ENCODE measurements at regions of chr11 and their contacts with region 1.

Region 1: DNA sequence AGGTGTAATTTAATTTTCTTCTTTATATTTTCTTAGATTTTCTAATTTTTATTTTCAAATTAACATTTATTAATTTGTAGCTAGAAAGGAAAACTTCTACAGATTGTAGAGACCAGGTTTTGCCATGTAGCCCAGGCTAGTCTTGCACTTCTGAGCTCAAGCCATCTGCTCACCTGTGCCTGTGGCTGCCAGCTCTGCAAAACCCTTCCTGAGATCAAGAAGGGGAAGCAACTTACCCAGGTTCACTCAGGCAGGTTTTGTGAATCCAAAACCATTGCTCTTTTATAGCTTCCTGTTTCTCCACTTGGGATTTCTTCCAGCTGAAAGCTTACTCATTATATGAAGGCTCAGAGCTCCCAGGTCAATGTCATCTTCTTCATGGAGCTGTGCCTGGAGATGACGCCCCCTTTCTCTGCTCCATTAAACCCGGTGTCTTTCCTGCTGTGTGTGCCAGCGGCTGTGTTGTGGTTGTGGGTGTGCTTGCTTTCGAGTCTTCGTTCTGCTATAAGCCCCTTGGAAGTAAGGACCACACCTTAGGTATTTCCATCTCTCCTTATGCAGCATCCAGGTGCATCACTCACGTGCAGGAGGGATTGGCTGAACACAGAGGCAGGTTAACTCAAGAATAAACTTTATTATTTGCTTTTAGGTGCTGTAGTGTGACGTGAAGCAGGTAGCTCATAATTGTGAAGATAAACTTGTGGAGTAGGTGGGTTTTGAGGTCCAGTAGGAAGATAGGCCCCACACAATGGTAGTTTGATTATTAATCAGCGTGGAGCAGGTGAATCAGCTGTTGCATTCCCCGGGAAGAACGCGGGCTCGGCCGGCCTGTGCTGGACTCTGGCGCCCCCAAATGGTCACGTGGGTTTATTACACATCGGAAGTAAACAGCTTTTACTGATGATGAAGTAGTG is 42.2 kb upstream of the INCENP start:
- DNase-seq: peak; percentile 76
- H3K4me3 ChIP-seq: no peak overlapping the region
- H3K27ac ChIP-seq: no peak overlapping the region
- H3K4me1 ChIP-seq: peaks cover 0 to 5% of the 10 kb centered on the region in 2 experiments; a peak in 1 of 4 replicates
- H3K27me3 ChIP-seq: no peaks in the 10 kb centered on the region
- CTCF ChIP-seq: peak; percentile 94
- EP300 ChIP-seq: no peak
- RAD21 ChIP-seq: peak; percentile 98

Region 2: GRCh38 chr11:61581030-61581928 is 500.4 kb before region 1 on chr11 and contains the start of gene SYT7:
- CTCF ChIA-PET with region 1: no interaction called
- POLR2A ChIA-PET with region 1: no interaction called
- DNase-seq: peak; percentile 97
- H3K4me3 ChIP-seq: peak within 1 kb of the TSS; percentile 53 to 57; a peak in 3 of 4 replicates
- H3K27ac ChIP-seq: peak within 1 kb of the TSS in 1 of 2 experiments; percentile 85; a peak in 2 of 4 replicates
- H3K4me1 ChIP-seq: peaks cover 0 to 45% of the 10 kb centered on the region in 2 experiments; a peak in 1 of 4 replicates
- H3K27me3 ChIP-seq: peaks cover 37% of the 10 kb centered on the region
- CTCF ChIP-seq: 0 out of 2 replicates have a peak, but pooled peaks have one; percentile 15
- EP300 ChIP-seq: no peak
- RAD21 ChIP-seq: peak; percentile 18; the same call in 1 of the 2 replicates
- polyA plus RNA-seq, gene SYT7: 1.1 and 1.4 TPM in 2 replicates

Region 3: DNA sequence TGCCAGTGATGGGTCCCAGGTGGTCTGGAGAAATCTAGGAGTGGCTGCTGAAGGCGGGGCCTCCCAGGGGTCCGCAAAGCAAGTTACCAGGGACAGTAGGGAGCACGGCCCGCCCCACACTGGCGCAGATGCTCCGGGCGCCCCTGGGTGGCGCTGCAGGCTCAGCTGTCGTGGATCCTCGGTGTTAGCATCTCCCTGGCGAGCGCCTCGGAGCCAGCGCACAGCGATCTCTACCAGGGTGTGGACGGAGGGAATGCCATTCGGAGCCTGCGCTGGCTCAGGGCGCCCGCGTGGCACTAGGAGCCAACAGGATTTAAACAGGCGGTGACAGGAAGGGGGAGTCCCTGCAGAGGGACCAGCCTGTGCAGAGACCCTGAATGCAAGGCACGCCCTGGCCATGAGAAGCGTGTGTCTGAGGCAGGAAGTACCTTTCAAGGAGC is 210.5 kb before region 1 on chr11:
- CTCF ChIA-PET with region 1: interaction called, 76 read pairs
- POLR2A ChIA-PET with region 1: no interaction called
- DNase-seq: peak; percentile 94
- H3K4me3 ChIP-seq: peak overlapping the region; percentile 12 to 17; a peak in 2 of 4 replicates
- H3K27ac ChIP-seq: no peak overlapping the region
- H3K4me1 ChIP-seq: peaks cover 0 to 13% of the 10 kb centered on the region in 2 experiments; a peak in 2 of 4 replicates
- H3K27me3 ChIP-seq: no peaks in the 10 kb centered on the region
- CTCF ChIP-seq: peak; percentile 89
- EP300 ChIP-seq: no peak
- RAD21 ChIP-seq: peak; percentile 88

Region 4: GRCh38 chr11:61899146-61899841 is 182.3 kb before region 1 on chr11:
- CTCF ChIA-PET with region 1: interaction called, 357 read pairs
- POLR2A ChIA-PET with region 1: interaction called, 5 read pairs
- DNase-seq: peak; percentile 97
- H3K4me3 ChIP-seq: peak overlapping the region in 1 of 2 experiments; percentile 44; a peak in 1 of 4 replicates
- H3K27ac ChIP-seq: no peak overlapping the region
- H3K4me1 ChIP-seq: no peaks in the 10 kb centered on the region
- H3K27me3 ChIP-seq: no peaks in the 10 kb centered on the region
- CTCF ChIP-seq: peak; percentile 98
- EP300 ChIP-seq: no peak
- RAD21 ChIP-seq: peak; percentile 89

Region 5: DNA sequence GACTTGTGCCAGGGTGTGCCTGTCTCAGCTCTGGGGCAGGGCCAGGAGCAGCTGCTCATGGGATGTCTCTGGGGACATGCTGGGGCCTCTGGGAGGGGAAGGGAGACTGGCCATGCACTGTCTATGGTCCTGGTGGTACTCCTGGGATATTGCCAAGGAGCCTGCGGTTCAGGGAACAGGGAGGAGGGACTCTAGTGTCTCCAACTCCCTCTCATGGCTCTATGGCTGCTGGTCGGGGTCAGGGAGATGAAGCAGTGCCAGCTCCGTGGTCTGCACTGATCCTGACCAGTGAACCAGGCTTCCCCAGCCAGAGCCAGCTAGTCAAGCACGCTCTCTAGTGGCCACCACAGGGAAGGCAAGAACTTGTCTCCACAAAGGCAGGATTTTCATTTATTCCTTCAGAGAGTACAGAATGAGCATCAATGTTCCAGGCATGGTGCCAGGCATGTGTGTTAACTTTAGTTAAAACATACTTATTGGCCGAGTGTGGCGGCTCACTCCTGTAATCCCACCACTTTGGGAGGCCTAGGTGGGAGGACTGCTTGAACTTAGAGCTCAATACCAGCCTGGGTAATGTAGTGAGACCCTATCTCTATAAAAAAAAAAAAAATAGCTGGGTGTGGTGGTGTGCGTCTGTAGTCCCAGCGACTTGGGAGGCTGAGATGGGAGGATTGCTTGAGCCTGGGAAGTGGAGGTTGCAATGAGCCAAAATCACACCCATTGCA is 134.0 kb before region 1 on chr11:
- CTCF ChIA-PET with region 1: interaction called, 142 read pairs
- POLR2A ChIA-PET with region 1: interaction called, 7 read pairs
- DNase-seq: peak; percentile 87
- H3K4me3 ChIP-seq: no peak overlapping the region
- H3K27ac ChIP-seq: no peak overlapping the region; a peak in 1 of 4 replicates
- H3K4me1 ChIP-seq: peaks cover 11 to 18% of the 10 kb centered on the region in 2 experiments; a peak in 2 of 4 replicates
- H3K27me3 ChIP-seq: no peaks in the 10 kb centered on the region
- CTCF ChIP-seq: peak; percentile 95
- EP300 ChIP-seq: no peak
- RAD21 ChIP-seq: peak; percentile 100

Region 6: GRCh38 chr11:62034045-62034355 is 47.6 kb before region 1 on chr11:
- CTCF ChIA-PET with region 1: interaction called, 10 read pairs
- POLR2A ChIA-PET with region 1: no interaction called
- DNase-seq: no peak
- H3K4me3 ChIP-seq: no peak overlapping the region
- H3K27ac ChIP-seq: no peak overlapping the region
- H3K4me1 ChIP-seq: no peaks in the 10 kb centered on the region
- H3K27me3 ChIP-seq: no peaks in the 10 kb centered on the region; the same call in 1 of the 2 replicates
- CTCF ChIP-seq: no peak
- EP300 ChIP-seq: no peak
- RAD21 ChIP-seq: no peak

Region 7: DNA sequence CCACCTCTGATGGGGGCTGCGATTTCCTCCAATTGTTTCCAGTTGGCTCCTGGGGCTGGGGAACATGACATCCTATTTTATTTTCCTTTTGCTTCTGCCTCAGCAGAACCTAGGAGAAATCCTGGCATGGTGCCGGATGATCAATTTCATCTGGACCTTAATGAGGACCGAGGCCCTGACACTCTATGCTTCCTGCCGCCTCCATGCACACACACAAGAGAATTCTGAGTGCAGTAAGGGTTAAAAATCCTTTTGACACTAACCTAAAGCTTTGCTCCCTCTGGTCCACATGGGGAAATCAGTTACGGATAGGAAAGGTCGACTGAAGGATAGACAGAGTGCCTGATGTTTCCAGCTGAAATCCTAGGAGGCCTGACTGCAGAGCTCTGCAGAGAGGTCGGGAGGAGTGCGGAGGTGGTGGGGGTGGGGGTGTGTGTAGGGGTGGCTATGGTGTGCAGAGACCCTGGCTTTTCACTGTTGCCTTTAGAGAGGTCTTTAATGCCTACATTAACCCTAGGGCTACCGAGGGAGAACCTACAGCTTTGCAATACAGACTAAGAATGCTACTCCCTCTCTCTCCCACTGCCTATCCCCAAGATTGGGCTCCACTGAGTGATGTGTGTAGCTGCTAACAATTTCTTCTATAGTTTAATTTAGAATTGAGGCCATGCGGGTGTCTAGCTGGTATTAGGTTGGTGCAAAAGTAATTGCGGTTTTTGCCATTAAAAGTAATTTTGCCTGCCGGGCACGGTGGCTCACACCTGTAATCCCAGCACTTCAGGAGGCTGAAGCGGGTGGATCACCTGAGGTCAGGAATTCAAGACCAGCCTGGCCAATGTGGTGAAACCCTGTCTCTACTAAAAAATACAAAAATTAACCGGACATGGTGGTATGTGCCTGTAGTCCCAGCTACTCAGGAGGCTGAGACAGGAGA is 11.4 kb before region 1 on chr11:
- CTCF ChIA-PET with region 1: interaction called, 72 read pairs
- POLR2A ChIA-PET with region 1: no interaction called
- DNase-seq: no peak
- H3K4me3 ChIP-seq: no peak overlapping the region
- H3K27ac ChIP-seq: no peak overlapping the region
- H3K4me1 ChIP-seq: no peaks in the 10 kb centered on the region
- H3K27me3 ChIP-seq: no peaks in the 10 kb centered on the region
- CTCF ChIP-seq: no peak
- EP300 ChIP-seq: no peak
- RAD21 ChIP-seq: no peak

Region 8: GRCh38 chr11:62166371-62166770 is 84.7 kb after region 1 on chr11:
- CTCF ChIA-PET with region 1: no interaction called
- POLR2A ChIA-PET with region 1: no interaction called
- DNase-seq: no peak
- H3K4me3 ChIP-seq: no peak overlapping the region
- H3K27ac ChIP-seq: no peak overlapping the region
- H3K4me1 ChIP-seq: no peaks in the 10 kb centered on the region
- H3K27me3 ChIP-seq: peaks cover 32% of the 10 kb centered on the region; the same call in 1 of the 2 replicates
- CTCF ChIP-seq: no peak
- EP300 ChIP-seq: no peak
- RAD21 ChIP-seq: no peak